Stomach (tissue), 19 donors: ENCODE measurements at regions of chrX and their contacts with region 1.

Region 1: DNA sequence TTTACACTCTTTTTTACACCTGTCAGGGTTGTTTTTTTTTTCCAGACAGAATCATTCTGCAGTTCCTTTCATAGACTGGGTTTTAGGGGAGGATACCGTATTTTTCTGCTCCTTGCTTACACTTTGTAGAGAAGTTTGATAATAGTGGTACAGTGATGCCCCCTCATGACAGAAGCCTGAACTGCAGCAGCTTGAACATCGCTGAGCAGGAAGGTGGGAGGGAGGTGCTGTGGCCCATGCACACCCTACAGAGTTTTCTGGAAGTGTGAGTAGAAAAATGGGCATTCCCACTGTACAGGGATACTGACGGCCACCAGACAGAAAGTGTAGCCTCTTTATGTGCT is 54.5 kb downstream of the RAB40A start:
- DNase-seq: peak; percentile 74 to 90
- H3K4me3 ChIP-seq: peak overlapping the region; percentile 16 to 29 (median 28)
- H3K27ac ChIP-seq: no peak overlapping the region
- H3K4me1 ChIP-seq: no peaks in the 10 kb centered on the region
- H3K27me3 ChIP-seq: no peaks in the 10 kb centered on the region
- CTCF ChIP-seq: peak in 5 of 7 experiments; percentile 46 to 70 (median 66)
- EP300 ChIP-seq: no peak
- POLR2A ChIP-seq: no peak

Region 2: DNA sequence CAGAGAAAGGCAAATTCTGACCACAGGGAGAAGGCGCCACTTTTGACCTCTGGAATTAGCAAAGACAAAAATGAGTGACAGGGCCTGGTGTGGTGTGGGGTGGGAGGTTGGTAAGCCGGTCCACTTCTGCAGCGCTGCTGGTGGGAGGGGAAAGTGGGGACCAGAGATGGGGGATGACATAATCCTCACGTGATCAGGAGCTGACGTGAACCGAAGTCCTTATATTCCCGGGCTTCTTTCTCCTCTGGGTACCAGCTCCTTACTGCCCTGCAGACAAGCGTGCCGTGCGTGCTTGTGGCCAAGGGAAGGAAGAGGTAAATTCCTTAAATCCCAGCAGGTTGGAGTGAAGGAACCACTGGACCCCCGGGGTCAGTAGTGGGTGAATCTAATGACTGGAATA is 134.8 kb before region 1 on chrX and contains the start of gene TCEAL7:
- intact Hi-C with region 1: loop called (anchors 10 kb)
- DNase-seq: peak in 1 of 2 donors; percentile 85
- H3K4me3 ChIP-seq: peak within 1 kb of the TSS; percentile 22 to 32 (median 28)
- H3K27ac ChIP-seq: peak within 1 kb of the TSS in 1 of 5 donors; percentile 52
- H3K4me1 ChIP-seq: no peaks in the 10 kb centered on the region
- H3K27me3 ChIP-seq: peaks cover 0 to 9% (median 0%) of the 10 kb centered on the region in 3 donors
- CTCF ChIP-seq: no peak
- EP300 ChIP-seq: no peak
- POLR2A ChIP-seq: no peak
- total RNA-seq, gene TCEAL7: 2.6 to 51.3 (median 17.0) TPM